Cardiac septum (tissue), 1 donor: ENCODE measurements at regions of chr20 and their contacts with region 1.

Region 1: GRCh38 chr20:62407221-62407992 is at the start of gene CABLES2:
- DNase-seq: peak; percentile 97
- total RNA-seq, gene CABLES2: 10.7 TPM

Region 2: DNA sequence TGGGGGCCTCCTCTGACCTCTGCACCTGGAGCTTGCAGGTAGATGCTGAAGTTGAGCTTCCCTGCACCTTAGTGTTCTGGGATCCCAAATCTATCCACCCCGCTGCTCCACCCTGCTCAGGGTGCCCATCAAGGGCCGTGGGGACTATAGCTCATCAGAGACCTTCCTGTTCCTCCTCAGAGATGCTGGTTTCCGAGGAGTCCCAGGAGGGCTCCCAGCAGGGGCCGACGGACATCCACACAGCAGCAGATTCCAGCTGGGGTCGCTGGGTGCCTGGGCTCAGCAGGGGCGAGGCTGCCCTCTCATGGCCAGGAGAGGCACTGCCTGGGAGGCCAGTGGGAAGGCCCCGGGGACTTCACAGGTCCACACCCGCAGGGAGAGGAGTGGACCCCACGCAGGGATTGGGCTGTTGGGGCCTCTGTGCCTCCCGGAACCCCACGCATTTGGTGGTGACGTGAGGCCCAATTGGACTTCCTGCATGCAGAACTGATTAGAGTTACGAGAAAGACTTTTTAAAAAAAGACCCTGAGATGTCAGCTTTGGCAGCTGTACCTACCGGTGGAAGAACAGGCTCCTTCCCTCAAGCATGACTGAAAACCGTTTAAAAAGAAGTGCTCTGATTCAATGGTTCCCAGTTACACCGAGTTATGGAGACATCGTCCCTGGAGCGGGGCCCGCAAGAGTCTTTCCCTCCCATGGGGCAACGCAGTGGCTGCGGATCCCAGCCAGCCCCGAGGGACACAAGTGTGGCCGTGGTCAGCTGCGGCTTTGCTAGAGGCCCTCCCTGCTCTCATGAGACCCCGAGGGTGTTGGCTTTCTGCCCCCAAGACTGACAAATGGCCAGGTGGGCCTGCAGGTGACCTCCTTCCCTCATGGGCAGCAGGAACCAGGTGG is 209.6 kb after region 1 on chr20:
- intact Hi-C with region 1: loop called (anchors 10 kb)
- DNase-seq: peak; percentile 92

Region 3: DNA sequence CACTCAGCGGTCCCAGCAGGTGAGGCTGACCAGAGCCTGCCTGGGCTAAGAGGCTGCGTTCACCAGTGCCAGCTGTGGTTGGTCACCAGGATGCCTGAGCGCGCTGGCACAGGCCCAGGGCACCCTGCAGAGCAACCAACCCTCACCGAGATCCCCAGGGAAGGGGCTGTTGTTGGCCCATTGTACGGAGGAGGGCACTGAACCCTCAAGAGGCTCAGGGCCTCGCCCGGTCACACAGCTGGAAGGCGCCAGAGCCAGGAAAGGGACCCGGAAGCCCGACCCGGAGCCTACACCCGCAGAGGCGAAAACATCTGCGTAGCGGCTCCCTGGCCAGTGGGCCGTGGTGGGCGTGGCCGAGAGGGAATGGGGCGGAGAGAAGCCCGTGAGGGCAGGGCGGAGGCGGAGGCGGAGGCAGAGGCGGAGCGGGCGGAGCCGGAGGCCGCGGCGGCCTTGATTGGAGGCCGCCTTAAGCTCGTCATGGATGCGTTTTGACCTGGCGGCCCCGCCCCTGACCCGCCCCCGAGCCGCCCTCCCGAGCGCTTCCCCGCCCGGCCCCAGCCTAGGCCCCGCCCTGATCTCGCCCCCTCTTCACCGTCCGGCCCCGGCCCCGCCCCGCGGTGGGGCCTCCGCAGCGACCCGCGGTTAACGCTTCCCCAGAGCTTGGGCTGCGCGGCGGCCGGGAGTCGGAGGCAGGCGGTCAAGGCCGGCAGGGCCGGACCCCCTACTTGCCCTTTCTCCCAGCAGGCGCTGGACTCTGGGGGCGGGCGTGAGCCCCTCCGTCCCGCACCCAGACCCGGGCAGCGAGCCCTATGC is 386.7 kb after region 1 on chr20:
- intact Hi-C with region 1: loop called (anchors 10 kb)
- DNase-seq: peak; percentile 99